A549 (cell line): ENCODE measurements at regions of chrX and their contacts with region 1.

Region 1: GRCh38 chrX:72526528-72527508 is 45.8 kb downstream of the HDAC8 start:
- DNase-seq: no peak
- ATAC-seq: no peak
- H3K4me3 ChIP-seq: no peak overlapping the region
- H3K27ac ChIP-seq: no peak overlapping the region
- H3K4me1 ChIP-seq: no peaks in the 10 kb centered on the region
- CTCF ChIP-seq: no peak
- EP300 ChIP-seq: no peak
- POLR2A ChIP-seq: no peak
- RAD21 ChIP-seq: no peak

Region 2: GRCh38 chrX:72392816-72393800 is 133.7 kb before region 1 on chrX:
- CTCF ChIA-PET with region 1: no interaction called
- POLR2A ChIA-PET with region 1: no interaction called
- DNase-seq: no peak
- ATAC-seq: no peak
- H3K4me3 ChIP-seq: no peak overlapping the region
- H3K27ac ChIP-seq: no peak overlapping the region
- H3K4me1 ChIP-seq: no peaks in the 10 kb centered on the region
- CTCF ChIP-seq: no peak
- EP300 ChIP-seq: no peak
- POLR2A ChIP-seq: no peak
- RAD21 ChIP-seq: no peak

Region 3: GRCh38 chrX:72540318-72540717 is 13.5 kb after region 1 on chrX:
- CTCF ChIA-PET with region 1: interaction called, 10 read pairs
- POLR2A ChIA-PET with region 1: no interaction called
- DNase-seq: peak in 1 of 2 experiments; percentile 15
- ATAC-seq: peak in 1 of 2 experiments; percentile 76; a peak in 3 of 6 replicates
- H3K4me3 ChIP-seq: no peak overlapping the region
- H3K27ac ChIP-seq: no peak overlapping the region
- H3K4me1 ChIP-seq: no peaks in the 10 kb centered on the region
- CTCF ChIP-seq: peak; percentile 45
- EP300 ChIP-seq: no peak
- POLR2A ChIP-seq: no peak
- RAD21 ChIP-seq: peak; percentile 42 to 51; a peak in 2 of 5 replicates